ENCODE measurements at regions of chr18 and their contacts with region 1.

Region 1: DNA sequence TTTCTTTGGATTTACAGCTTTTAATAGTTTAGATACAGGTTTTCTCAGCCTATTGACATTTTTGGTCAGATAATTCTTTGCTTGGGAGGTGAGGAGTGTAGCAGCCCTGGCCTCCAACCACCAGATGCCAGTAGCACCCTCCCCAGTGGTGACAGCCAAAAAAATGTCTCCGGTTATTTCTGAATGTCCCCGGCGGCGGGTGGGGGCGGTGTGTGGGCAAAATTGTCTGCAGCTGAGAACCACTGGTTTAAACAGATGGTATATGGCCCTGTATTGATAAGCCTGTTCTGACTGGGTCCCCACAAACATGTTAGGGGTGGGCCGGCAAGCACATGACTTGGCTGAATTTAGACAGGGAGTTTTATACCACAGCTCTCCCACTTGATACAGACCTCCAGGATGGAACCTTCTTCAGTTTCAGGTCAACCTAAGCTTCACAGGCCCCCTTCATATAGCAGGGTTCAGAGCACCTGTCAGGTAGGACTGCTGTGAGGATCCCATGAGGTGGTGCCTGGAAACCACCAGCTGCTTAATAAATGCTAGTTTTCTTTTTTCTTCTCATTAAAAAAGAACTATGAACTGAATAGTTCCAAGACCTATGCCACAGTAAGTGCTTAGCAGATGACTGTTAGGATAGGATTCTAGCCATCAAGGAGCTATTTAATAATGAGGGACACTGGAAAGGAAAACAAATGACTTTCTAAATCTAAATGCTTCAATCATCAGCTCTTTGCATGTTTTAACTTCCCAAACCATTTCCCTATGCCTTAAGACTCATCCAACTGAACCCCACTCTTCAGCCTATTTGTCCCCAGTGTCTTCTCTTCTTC is 18.1 kb downstream of the LPIN2 start:
- DNase-seq: peak; percentile 85
- ATAC-seq: peak; percentile 38
- H3K4me3 Mint-ChIP-seq: no peak overlapping the region
- H3K27ac Mint-ChIP-seq: peak overlapping the region; percentile 80
- H3K4me1 Mint-ChIP-seq: peaks cover 90% of the 10 kb centered on the region
- H3K27me3 Mint-ChIP-seq: no peaks in the 10 kb centered on the region

Region 2: DNA sequence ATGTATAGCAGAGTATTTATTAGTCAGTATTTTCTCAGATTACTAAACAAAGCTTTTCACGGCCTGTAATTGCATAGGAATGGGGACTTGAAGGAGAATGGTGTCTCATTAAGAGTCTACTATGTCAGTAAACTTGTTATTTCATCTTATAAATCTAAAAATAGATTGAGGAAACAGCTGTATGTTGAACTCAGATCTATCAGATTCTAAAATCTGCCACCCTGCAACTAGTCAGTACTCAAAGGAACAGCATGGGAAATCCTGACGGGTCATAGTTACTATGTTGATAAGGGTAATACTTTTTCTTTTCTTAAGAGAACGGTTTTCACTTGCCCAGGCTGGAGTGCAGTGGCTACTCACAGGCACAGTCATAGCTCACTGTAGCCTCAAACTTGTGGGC is 218.2 kb before region 1 on chr18:
- CTCF ChIA-PET with region 1: no interaction called
- POLR2A ChIA-PET with region 1: no interaction called
- intact Hi-C with region 1: no loop called
- DNase-seq: no peak
- ATAC-seq: no peak
- H3K4me3 Mint-ChIP-seq: no peak overlapping the region
- H3K27ac Mint-ChIP-seq: no peak overlapping the region
- H3K4me1 Mint-ChIP-seq: no peaks in the 10 kb centered on the region
- H3K27me3 Mint-ChIP-seq: no peaks in the 10 kb centered on the region

Region 3: DNA sequence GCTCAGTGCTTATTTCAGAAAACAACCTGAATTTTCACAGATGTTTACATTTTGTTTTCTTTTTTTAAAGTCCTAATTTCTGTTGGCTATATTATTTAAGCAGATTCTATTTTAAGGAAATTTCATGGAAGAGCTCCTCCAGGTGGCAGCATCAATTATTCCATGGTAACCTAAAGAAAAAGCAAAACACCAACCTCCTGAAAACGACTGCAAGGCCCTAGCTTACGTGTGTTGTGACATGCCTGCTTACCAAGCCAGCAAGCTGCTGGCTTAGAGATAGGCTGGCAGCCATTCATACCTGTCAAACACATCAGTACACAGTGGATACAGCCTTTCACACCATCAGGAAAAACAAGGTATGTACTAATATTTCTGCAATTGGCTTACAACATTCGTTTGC is 46.8 kb before region 1 on chr18:
- CTCF ChIA-PET with region 1: interaction called, 82 read pairs
- POLR2A ChIA-PET with region 1: no interaction called
- intact Hi-C with region 1: no loop called
- DNase-seq: no peak
- ATAC-seq: peak; percentile 70
- H3K4me3 Mint-ChIP-seq: no peak overlapping the region
- H3K27ac Mint-ChIP-seq: no peak overlapping the region
- H3K4me1 Mint-ChIP-seq: peaks cover 53% of the 10 kb centered on the region
- H3K27me3 Mint-ChIP-seq: no peaks in the 10 kb centered on the region

Region 4: DNA sequence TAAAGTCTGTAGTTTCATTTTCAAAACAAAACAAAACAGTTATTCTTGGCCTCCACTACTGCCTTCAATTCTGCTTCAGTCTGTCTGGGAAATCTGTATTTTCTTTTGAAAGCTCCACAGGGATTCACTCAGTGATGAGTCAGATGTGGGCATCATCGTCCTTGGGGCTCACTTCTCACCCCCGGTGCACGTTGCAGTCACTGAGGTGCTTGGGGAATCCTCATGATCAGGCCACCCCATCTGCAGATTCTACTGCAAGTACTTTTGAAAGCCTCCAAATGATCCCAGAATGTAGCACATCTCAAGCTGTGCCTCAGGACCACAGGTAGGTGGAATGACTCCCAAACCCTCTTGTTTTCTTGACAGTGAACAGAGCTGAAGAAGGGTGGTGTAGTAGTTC is 16.2 kb before region 1 on chr18:
- CTCF ChIA-PET with region 1: interaction called, 68 read pairs
- POLR2A ChIA-PET with region 1: interaction called, 6 read pairs
- intact Hi-C with region 1: loop called (anchors 1 kb)
- DNase-seq: peak; percentile 72
- ATAC-seq: peak; percentile 27
- H3K4me3 Mint-ChIP-seq: peak overlapping the region; percentile 74
- H3K27ac Mint-ChIP-seq: peak overlapping the region; percentile 98
- H3K4me1 Mint-ChIP-seq: peaks cover 83% of the 10 kb centered on the region
- H3K27me3 Mint-ChIP-seq: no peaks in the 10 kb centered on the region

Region 5: DNA sequence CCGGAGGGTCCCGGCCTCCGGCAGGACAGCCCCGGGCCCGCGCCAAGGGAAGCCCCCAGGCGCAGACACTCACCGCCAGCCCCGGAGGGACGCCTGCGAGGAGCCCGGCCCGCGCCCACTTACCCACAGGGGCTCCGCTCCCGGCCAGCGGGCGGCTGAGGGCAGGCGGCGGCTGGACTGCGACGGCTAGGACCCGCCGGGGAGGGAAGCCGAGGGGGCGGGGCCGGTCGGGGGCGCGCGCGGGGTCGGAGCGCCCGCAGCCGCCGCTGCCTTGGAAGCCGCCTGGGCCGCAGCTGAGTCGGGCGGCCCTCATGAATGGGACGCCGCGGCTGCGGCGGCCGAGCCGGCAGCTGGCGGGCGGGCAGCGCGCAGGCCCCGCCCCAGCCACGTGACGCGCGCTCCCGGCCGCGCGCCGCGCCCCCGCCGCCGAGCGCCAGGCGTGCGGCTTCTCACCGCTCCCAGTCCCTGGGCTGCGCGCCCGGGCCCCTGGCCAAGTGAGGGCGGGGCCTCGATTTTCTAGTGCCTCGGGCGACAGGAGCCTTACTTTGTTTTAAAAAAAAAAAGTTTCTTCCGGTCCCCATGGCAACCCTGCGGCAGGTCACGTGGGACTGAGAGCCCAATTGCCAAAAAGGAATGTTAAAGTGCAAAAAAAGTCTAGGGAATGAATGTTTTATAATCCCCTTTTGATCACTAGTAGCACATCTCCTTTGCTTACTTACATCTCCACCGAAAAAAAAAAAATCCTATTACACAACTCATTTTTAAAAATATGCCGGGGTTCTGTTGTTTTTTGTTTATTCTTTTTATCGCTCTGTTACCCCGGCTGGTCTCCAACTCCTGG is 18.4 kb after region 1 on chr18 and contains the start of gene LPIN2:
- CTCF ChIA-PET with region 1: interaction called, 6 read pairs
- POLR2A ChIA-PET with region 1: interaction called, 5 read pairs
- intact Hi-C with region 1: loop called (anchors 1 kb)
- DNase-seq: peak; percentile 98
- ATAC-seq: peak; percentile 96
- H3K4me3 Mint-ChIP-seq: peak within 1 kb of the TSS; percentile 95
- H3K27ac Mint-ChIP-seq: peak within 1 kb of the TSS; percentile 94
- H3K4me1 Mint-ChIP-seq: peaks cover 66% of the 10 kb centered on the region
- H3K27me3 Mint-ChIP-seq: no peaks in the 10 kb centered on the region
- total RNA-seq, gene LPIN2: 82.6 to 95.3 TPM

Region 6: DNA sequence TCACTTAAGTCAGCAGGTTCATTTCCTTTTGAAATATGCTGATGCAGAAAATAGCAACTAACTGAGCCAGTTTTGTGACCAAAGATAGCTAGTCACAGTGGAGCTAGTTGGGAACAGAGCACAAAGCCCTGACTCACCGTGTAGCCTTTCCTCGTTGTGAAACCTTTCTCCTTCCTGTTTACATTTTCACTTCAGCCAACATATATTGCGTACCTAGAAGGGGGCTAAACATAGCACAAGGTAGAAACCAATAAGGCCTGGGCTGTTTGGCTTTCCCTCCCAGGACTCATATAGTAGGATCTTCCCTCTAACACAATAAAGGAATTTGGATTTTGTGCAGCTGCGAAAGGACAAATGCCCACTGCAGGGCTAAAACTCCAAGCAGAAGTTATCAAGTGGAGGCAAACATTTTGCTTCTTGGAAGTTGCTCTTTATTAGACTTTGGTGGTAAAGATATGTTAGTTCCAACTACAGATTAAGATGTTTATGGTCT is 42.7 kb after region 1 on chr18:
- CTCF ChIA-PET with region 1: interaction called, 5 read pairs
- POLR2A ChIA-PET with region 1: no interaction called
- intact Hi-C with region 1: loop called in 1 of 2 experiments (anchors 1 kb)
- DNase-seq: peak; percentile 40
- ATAC-seq: peak; percentile 84
- H3K4me3 Mint-ChIP-seq: no peak overlapping the region
- H3K27ac Mint-ChIP-seq: no peak overlapping the region
- H3K4me1 Mint-ChIP-seq: peaks cover 21% of the 10 kb centered on the region
- H3K27me3 Mint-ChIP-seq: no peaks in the 10 kb centered on the region

Region 7: DNA sequence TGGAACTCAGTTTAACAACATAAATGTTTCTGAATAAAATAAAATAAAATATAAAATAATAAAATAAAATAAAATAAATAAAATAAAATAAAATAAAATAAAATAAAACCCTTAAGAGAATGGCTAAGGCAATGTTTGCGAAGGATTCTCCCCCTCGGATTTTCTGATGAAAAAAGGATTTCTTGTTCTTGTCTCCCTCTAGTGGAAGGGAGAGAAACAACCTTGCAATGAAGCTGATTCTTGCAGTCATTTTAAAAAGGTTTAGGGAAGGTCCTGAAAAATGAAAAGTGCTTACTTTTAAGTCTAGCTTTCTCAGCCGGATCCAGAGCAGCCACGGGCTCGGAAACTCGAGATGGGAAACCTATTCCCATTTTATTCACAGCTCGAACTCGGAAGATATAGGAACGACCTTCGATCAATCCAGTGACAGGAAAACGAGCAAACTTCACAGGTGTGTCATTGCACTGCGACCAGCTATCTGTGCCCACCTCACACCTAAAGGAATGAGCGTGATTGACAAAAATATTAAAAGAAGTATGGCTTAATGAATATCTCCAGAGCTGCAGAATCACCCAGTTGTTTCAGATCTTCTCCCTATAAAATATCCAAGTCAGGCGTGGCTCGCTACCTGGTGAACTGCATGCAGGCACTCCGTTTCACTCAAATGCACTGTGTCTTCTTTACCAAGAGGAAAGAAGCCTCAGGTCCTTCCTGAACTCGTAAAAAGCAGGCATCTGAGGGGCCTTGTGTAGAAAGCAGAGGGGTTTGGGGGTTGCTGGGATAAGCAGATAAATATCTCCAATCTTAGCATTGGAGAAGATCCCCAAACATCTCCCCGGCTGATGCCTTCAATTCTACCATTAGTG is 156.8 kb after region 1 on chr18:
- CTCF ChIA-PET with region 1: interaction called, 20 read pairs
- POLR2A ChIA-PET with region 1: no interaction called
- intact Hi-C with region 1: loop called in 1 of 2 experiments (anchors 2 kb)
- DNase-seq: no peak
- ATAC-seq: no peak
- H3K4me3 Mint-ChIP-seq: no peak overlapping the region
- H3K27ac Mint-ChIP-seq: no peak overlapping the region
- H3K4me1 Mint-ChIP-seq: peaks cover 4% of the 10 kb centered on the region
- H3K27me3 Mint-ChIP-seq: no peaks in the 10 kb centered on the region

Region 8: GRCh38 chr18:3209859-3210569 is 215.2 kb after region 1 on chr18:
- CTCF ChIA-PET with region 1: no interaction called
- POLR2A ChIA-PET with region 1: no interaction called
- intact Hi-C with region 1: no loop called
- DNase-seq: no peak
- ATAC-seq: peak; percentile 33
- H3K4me3 Mint-ChIP-seq: no peak overlapping the region
- H3K27ac Mint-ChIP-seq: no peak overlapping the region
- H3K4me1 Mint-ChIP-seq: peaks cover 12% of the 10 kb centered on the region
- H3K27me3 Mint-ChIP-seq: no peaks in the 10 kb centered on the region

Measured in activated CD4-positive, alpha-beta T cell treated with anti-CD3 and anti-CD28 coated beads for 36 hours (primary cell).